ENCODE measurements at regions of chr22 and their contacts with region 1.

Region 1: GRCh38 chr22:49481659-49482399 is 345.8 kb downstream of the BRD1 start:
- DNase-seq: peak; percentile 13
- H3K4me3 Mint-ChIP-seq: peak overlapping the region; percentile 61
- H3K27ac Mint-ChIP-seq: no peak overlapping the region
- H3K4me1 Mint-ChIP-seq: peaks cover 18% of the 10 kb centered on the region
- H3K27me3 Mint-ChIP-seq: peaks cover 30% of the 10 kb centered on the region
- CTCF ChIP-seq: no peak

Region 2: GRCh38 chr22:49213731-49214352 is 268.0 kb before region 1 on chr22:
- CTCF ChIA-PET with region 1: no interaction called
- intact Hi-C with region 1: no loop called
- DNase-seq: no peak
- H3K4me3 Mint-ChIP-seq: no peak overlapping the region
- H3K27ac Mint-ChIP-seq: no peak overlapping the region
- H3K4me1 Mint-ChIP-seq: no peaks in the 10 kb centered on the region
- H3K27me3 Mint-ChIP-seq: no peaks in the 10 kb centered on the region
- CTCF ChIP-seq: no peak

Region 3: GRCh38 chr22:49429066-49429465 is 52.8 kb before region 1 on chr22:
- CTCF ChIA-PET with region 1: interaction called, 4 read pairs
- intact Hi-C with region 1: loop called (anchors 10 kb)
- DNase-seq: no peak
- H3K4me3 Mint-ChIP-seq: no peak overlapping the region
- H3K27ac Mint-ChIP-seq: no peak overlapping the region
- H3K4me1 Mint-ChIP-seq: no peaks in the 10 kb centered on the region
- H3K27me3 Mint-ChIP-seq: peaks cover 67% of the 10 kb centered on the region
- CTCF ChIP-seq: no peak

Region 4: GRCh38 chr22:49466878-49467595 is 14.8 kb before region 1 on chr22:
- CTCF ChIA-PET with region 1: no interaction called
- intact Hi-C with region 1: no loop called
- DNase-seq: no peak
- H3K4me3 Mint-ChIP-seq: no peak overlapping the region
- H3K27ac Mint-ChIP-seq: no peak overlapping the region
- H3K4me1 Mint-ChIP-seq: peaks cover 12% of the 10 kb centered on the region
- H3K27me3 Mint-ChIP-seq: peaks cover 38% of the 10 kb centered on the region
- CTCF ChIP-seq: no peak